ENCODE measurements at regions of chr4 and their contacts with region 1.

Region 1: GRCh38 chr4:184100297-184100885 is 117.3 kb downstream of the ENPP6 start:
- DNase-seq: peak in 1 of 2 experiments; percentile 94
- H3K4me3 ChIP-seq: no peak overlapping the region
- H3K27ac ChIP-seq: no peak overlapping the region
- H3K4me1 ChIP-seq: peaks cover 0 to 6% (median 1%) of the 10 kb centered on the region in 4 experiments; a peak in 4 of 7 replicates
- H3K27me3 ChIP-seq: peaks cover 0 to 9% (median 2%) of the 10 kb centered on the region in 4 experiments; a peak in 2 of 7 replicates
- CTCF ChIP-seq: peak in 2 of 3 experiments; percentile 89 to 94; a peak in 3 of 4 replicates
- EP300 ChIP-seq: no peak
- POLR2A ChIP-seq: no peak
- RAD21 ChIP-seq: peak; percentile 90 to 93

Region 2: DNA sequence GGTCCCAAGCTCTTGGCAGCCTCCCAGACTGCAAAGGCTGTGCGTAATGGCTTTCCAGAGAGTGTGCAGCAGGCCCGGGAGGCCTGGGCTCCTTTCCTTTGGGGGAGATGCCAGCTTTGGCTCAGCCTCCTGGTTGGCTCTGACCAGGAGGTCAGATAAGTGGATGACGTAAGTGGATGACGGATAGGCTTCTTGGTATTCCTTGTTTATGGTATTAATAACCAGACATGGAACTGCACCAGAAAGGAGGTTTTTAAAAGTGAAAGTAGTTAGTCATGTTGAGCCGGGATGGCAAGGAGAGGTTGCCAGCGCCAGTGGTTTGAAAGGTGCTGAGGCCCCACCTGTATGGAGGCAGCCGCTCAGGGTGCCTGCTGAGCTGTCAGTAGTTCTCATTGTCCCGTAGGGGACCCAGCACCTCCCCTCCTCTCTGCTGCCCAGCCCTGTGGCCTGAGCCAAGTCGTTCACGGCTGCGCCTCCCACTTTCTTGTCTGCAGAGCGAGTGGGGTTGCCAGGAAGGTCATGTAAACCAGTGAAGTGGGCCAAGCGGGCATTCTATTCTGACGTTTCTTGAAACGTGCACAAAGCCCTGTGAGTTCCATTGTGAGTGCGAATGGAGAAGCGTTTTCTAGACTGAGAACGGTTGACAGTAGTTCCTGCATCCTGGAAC is 224.0 kb before region 1 on chr4:
- CTCF ChIA-PET with region 1: interaction called, 11 read pairs
- POLR2A ChIA-PET with region 1: no interaction called
- DNase-seq: no peak
- H3K4me3 ChIP-seq: no peak overlapping the region
- H3K27ac ChIP-seq: no peak overlapping the region
- H3K4me1 ChIP-seq: peaks cover 0 to 5% (median 0%) of the 10 kb centered on the region in 4 experiments; a peak in 2 of 7 replicates
- H3K27me3 ChIP-seq: peaks cover 0 to 2% (median 0%) of the 10 kb centered on the region in 4 experiments; a peak in 2 of 7 replicates
- CTCF ChIP-seq: no peak
- EP300 ChIP-seq: no peak
- POLR2A ChIP-seq: no peak
- RAD21 ChIP-seq: no peak

Region 3: GRCh38 chr4:184053434-184053833 is 47.0 kb before region 1 on chr4:
- CTCF ChIA-PET with region 1: interaction called, 11 read pairs
- POLR2A ChIA-PET with region 1: no interaction called
- DNase-seq: no peak
- H3K4me3 ChIP-seq: no peak overlapping the region
- H3K27ac ChIP-seq: no peak overlapping the region
- H3K4me1 ChIP-seq: peaks cover 0 to 4% (median 2%) of the 10 kb centered on the region in 4 experiments; a peak in 5 of 7 replicates
- H3K27me3 ChIP-seq: no peaks in the 10 kb centered on the region
- CTCF ChIP-seq: no peak
- EP300 ChIP-seq: no peak
- POLR2A ChIP-seq: no peak
- RAD21 ChIP-seq: no peak

Region 4: GRCh38 chr4:184126800-184127199 is 26.4 kb after region 1 on chr4:
- CTCF ChIA-PET with region 1: interaction called, 12 read pairs
- POLR2A ChIA-PET with region 1: no interaction called
- DNase-seq: no peak
- H3K4me3 ChIP-seq: no peak overlapping the region
- H3K27ac ChIP-seq: no peak overlapping the region
- H3K4me1 ChIP-seq: no peaks in the 10 kb centered on the region
- H3K27me3 ChIP-seq: no peaks in the 10 kb centered on the region; a peak in 1 of 7 replicates
- CTCF ChIP-seq: no peak
- EP300 ChIP-seq: no peak
- POLR2A ChIP-seq: no peak
- RAD21 ChIP-seq: no peak

Region 5: GRCh38 chr4:184168406-184169019 is 68.1 kb after region 1 on chr4:
- CTCF ChIA-PET with region 1: interaction called, 151 read pairs
- POLR2A ChIA-PET with region 1: interaction called, 3 read pairs
- DNase-seq: peak; percentile 77 to 92
- H3K4me3 ChIP-seq: peak overlapping the region in 1 of 4 experiments; percentile 41; a peak in 2 of 8 replicates
- H3K27ac ChIP-seq: no peak overlapping the region
- H3K4me1 ChIP-seq: peaks cover 12 to 28% (median 17%) of the 10 kb centered on the region in 4 experiments
- H3K27me3 ChIP-seq: no peaks in the 10 kb centered on the region; a peak in 2 of 7 replicates
- CTCF ChIP-seq: peak; percentile 91 to 96 (median 92)
- EP300 ChIP-seq: 0 out of 3 replicates have a peak, but pooled peaks of 1 of the 2 experiments have one; percentile 33
- POLR2A ChIP-seq: no peak
- RAD21 ChIP-seq: peak; percentile 78 to 86

Measured in H1 (cell line).